BJ (cell line): ENCODE measurements at regions of chr12 and their contacts with region 1.

Region 1: DNA sequence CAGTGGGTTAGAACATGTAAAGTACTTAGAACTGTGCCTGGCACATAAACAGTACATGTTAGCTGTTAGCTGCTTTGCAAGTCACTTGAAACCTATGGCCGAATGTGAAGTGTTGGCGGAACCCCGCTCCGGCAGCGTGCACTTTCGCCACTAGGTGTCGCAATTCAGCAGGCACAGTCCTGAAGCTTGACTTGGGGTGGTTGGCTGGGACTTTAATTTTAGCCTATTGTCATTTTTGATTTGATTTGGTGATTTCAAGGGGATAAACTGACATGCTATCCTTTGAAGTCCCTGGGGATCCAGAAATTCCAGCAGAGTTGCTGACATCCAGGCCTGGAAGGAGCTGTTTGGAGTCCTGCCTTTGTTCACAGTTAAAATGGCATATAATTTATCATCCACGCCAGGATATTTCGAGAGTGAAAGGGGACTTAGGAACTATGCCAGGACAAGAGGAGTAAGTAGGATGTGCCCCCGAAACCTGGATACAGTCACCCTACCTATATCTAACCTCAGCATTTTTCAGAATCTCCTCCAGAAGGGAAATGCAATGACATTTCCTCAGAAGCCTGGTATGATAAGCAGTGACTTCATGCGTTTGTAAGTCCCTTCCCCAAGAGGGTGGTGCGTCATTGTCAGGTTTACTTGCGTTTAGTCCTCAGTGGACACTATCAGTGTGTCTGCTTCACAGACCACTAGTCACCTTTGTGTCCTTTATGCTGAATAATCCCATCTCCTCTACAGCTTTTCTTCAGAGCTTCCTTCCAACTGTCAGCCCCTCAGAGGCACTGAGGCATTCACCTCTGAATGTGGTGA is 3.5 kb upstream of the TSPAN9 start:
- DNase-seq: peak; percentile 36
- H3K4me3 ChIP-seq: no peak overlapping the region
- H3K27me3 ChIP-seq: no peaks in the 10 kb centered on the region; the same call in 1 of the 2 replicates
- CTCF ChIP-seq: peak; percentile 99

Region 2: DNA sequence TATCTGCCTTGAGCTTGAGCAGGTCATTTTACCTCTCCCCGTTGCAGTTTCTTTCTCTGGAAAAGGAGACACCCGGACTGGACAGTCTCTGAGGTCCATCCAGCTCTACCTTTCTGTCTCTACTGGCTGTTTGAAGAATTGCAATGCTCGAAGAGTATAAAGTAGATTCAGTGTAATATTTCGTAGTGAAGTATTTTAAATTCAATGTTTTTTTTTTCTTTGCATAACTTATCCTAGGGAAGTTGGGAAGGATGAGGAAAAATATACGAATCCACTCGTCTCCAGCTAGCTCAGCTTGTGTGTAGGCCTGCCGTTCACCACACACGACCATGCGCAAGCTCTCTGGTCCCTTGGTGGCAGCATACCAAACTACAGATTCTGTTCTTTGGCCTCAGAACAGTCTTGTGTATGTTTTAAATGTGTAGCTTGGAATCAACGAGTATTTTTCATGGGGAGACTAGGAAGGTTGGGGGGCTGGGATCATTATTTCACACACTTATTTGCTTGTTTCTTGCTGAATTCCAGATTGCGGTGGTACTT is 712.9 kb before region 1 on chr12:
- CTCF ChIA-PET with region 1: no interaction called
- POLR2A ChIA-PET with region 1: no interaction called
- DNase-seq: no peak
- H3K4me3 ChIP-seq: no peak overlapping the region
- H3K27me3 ChIP-seq: no peaks in the 10 kb centered on the region
- CTCF ChIP-seq: no peak; the same call in 1 of the 2 replicates

Region 3: GRCh38 chr12:3060778-3061458 is 12.7 kb before region 1 on chr12:
- CTCF ChIA-PET with region 1: interaction called, 18 read pairs
- POLR2A ChIA-PET with region 1: no interaction called
- DNase-seq: peak; percentile 55
- H3K4me3 ChIP-seq: no peak overlapping the region
- H3K27me3 ChIP-seq: peaks cover 7% of the 10 kb centered on the region
- CTCF ChIP-seq: no peak

Region 4: GRCh38 chr12:3122835-3123678 is 49.4 kb after region 1 on chr12:
- CTCF ChIA-PET with region 1: interaction called, 12 read pairs
- POLR2A ChIA-PET with region 1: no interaction called
- DNase-seq: no peak
- H3K4me3 ChIP-seq: no peak overlapping the region
- H3K27me3 ChIP-seq: no peaks in the 10 kb centered on the region
- CTCF ChIP-seq: peak; percentile 37; the same call in 1 of the 2 replicates

Region 5: DNA sequence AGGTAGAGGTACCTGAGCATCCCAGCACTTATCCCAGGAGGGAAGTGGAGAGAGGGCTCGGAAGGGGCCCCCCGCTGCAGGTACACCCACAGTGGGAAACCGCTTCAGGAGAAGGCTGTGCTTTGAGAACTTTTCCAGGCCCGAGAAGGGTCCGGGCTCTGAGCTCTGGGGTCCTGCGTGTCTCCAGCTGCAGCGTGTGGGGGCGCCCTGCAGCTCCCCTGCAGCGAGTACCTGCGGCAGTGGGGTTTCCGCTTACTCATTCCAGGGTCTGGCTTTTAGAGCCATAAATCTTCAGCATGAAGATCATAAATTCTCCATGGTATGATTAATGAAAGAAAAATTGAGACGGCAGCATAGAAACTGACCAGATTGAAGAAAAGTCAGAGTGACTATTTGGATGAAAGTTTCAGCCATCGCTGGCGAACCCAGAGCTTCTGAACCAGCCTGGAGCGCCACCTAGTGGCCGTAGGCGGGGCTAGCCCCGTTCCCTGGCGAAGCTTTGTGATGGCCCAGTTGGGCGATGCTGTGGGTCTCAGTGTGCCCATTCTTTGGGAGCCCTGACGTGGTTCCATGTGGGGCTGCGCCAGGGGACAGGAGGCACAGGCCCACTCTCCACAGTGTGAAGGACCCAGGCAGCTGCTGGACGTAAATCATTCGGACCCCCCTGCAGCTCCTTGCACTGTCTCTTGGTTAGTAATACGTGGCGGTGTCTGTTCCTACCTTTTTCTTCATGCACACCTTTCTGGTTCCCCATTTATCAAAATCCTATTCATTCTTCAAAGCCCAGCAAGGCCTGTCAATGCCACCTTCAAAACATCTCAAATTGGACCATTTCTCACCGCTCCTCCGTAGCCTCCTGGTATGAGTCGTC is 201.8 kb after region 1 on chr12:
- CTCF ChIA-PET with region 1: interaction called, 122 read pairs
- POLR2A ChIA-PET with region 1: no interaction called
- DNase-seq: no peak
- H3K4me3 ChIP-seq: no peak overlapping the region
- H3K27me3 ChIP-seq: no peaks in the 10 kb centered on the region
- CTCF ChIP-seq: peak; percentile 98

Region 6: DNA sequence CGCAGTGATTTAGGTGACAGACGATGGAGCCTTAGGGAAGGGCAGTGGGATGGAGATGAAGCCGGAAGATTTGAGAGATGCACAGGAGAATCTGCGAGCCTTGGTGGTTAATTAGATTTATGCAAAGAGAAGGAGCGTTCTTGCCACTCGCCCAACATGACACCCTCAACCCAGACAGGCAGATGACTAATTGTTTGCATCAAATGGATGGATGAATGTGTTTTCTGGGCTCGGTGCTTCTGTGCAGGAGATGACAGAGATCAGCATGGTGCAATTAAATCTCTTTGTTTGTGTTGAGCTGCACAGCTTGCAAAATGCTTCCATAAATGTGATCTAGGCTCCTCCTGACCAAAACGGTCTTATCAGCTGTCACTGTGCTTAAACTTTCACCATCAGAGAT is 215.0 kb after region 1 on chr12:
- CTCF ChIA-PET with region 1: interaction called, 10 read pairs
- POLR2A ChIA-PET with region 1: no interaction called
- DNase-seq: no peak
- H3K4me3 ChIP-seq: no peak overlapping the region
- H3K27me3 ChIP-seq: peaks cover 1% of the 10 kb centered on the region; the same call in 1 of the 2 replicates
- CTCF ChIP-seq: no peak